Activated CD8-positive, alpha-beta T cell treated with anti-CD3 and anti-CD28 coated beads for 36 hours (primary cell): ENCODE measurements at regions of chr16 and their contacts with region 1.

Region 1: GRCh38 chr16:67159593-67160406 is at the starts of genes FBXL8 and TRADD:
- DNase-seq: peak; percentile 87
- ATAC-seq: peak; percentile 61
- H3K4me3 Mint-ChIP-seq: peak within 1 kb of the TSS; percentile 90
- H3K27ac Mint-ChIP-seq: peak within 1 kb of the TSS; percentile 92
- H3K4me1 Mint-ChIP-seq: peaks cover 53% of the 10 kb centered on the region
- H3K27me3 Mint-ChIP-seq: peaks cover 32% of the 10 kb centered on the region
- CTCF ChIP-seq: peak; percentile 31
- total RNA-seq, gene FBXL8: 27.1 to 28.6 TPM
- total RNA-seq, gene TRADD: 28.4 to 31.2 TPM

Region 2: DNA sequence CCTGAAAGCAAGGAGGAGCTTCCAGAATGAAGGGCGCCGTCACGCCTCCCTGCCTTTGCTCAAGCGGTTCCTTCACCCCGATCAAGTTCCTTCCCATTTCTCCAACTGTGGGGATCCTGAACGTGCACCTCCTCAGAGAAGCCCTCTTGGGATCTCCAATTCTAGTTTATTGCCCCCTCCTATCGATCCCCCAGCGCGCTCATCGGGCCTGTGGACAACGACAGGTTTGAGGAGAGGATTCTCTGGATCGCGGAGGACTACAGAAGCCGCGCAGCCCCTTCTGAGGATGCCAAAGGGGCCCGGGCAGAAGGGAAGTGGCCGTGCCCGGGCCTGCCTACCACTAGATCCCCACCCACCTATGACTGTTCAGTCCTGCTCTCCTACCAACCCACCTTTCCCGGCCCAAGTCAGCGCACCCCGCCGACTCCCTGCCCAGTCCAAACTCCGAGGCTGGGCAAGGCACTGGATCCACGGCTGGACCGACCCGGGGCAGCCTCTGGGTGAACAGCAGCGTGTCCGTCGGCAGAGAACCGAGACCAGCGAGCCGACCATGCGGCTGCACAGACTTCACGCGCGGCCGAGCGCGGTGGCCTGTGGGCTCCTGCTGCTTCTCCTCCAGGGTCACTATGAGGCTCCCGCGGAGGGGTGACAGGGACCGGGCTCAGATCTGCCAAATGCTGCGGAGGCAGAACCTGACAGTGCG is 211.5 kb before region 1 on chr16:
- CTCF ChIA-PET with region 1: interaction called, 20 read pairs
- POLR2A ChIA-PET with region 1: interaction called, 3 read pairs
- intact Hi-C with region 1: loop called (anchors 5 kb)
- DNase-seq: no peak
- ATAC-seq: peak; percentile 26
- H3K4me3 Mint-ChIP-seq: peak overlapping the region; percentile 79
- H3K27ac Mint-ChIP-seq: no peak overlapping the region
- H3K4me1 Mint-ChIP-seq: peaks cover 22% of the 10 kb centered on the region
- H3K27me3 Mint-ChIP-seq: peaks cover 39% of the 10 kb centered on the region
- CTCF ChIP-seq: no peak

Region 3: DNA sequence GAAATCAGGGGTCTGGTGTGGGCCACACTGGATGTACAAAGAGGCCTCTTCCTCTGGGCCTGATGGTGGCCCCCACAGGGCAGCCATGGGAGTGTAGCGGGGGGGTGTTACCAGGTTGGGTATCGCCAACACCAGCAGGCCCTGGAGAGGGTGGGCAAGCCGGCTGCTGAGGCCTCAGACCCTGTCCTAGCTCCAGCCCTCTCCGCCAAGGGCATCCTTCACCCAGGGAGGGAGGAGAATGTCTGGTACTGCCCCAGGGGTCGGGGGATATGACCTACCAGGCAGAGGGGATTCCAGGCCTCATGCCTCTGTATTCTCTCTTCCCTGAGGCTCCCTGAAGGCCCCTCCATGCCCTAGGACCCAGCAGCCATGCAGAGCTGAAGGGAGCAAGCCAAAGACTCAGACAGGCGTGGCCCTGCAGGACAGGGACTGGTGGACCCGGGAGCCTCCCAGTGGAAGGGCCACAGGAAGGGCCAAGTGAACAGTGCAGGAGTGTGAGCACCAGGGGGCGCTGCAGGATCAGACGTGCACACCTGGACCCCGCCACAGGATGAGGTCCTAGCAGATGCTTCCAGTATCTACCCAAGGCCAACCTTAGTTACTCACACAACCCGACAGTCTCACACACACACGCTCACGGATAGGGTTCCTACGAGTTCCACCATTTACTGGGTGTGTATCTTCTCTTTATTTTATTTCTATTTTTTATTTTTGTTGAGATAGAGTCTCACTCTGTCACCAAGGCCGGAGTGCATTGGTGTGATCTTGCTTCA is 182.3 kb before region 1 on chr16:
- CTCF ChIA-PET with region 1: interaction called, 41 read pairs
- POLR2A ChIA-PET with region 1: interaction called, 3 read pairs
- intact Hi-C with region 1: loop called (anchors 5 kb)
- DNase-seq: peak; percentile 96
- ATAC-seq: peak; percentile 96
- H3K4me3 Mint-ChIP-seq: no peak overlapping the region
- H3K27ac Mint-ChIP-seq: no peak overlapping the region
- H3K4me1 Mint-ChIP-seq: peaks cover 44% of the 10 kb centered on the region
- H3K27me3 Mint-ChIP-seq: peaks cover 4% of the 10 kb centered on the region
- CTCF ChIP-seq: peak; percentile 96

Region 4: GRCh38 chr16:67028555-67029248 is 131.1 kb before region 1 on chr16 and contains the start of gene CBFB:
- CTCF ChIA-PET with region 1: interaction called, 187 read pairs
- POLR2A ChIA-PET with region 1: interaction called, 4 read pairs
- intact Hi-C with region 1: loop called (anchors 5 kb)
- DNase-seq: peak; percentile 92
- ATAC-seq: peak; percentile 92
- H3K4me3 Mint-ChIP-seq: peak within 1 kb of the TSS; percentile 86
- H3K27ac Mint-ChIP-seq: peak within 1 kb of the TSS; percentile 95
- H3K4me1 Mint-ChIP-seq: peaks cover 54% of the 10 kb centered on the region
- H3K27me3 Mint-ChIP-seq: no peaks in the 10 kb centered on the region
- CTCF ChIP-seq: peak; percentile 27
- total RNA-seq, gene CBFB: 111 to 114 TPM

Region 5: GRCh38 chr16:67055712-67056487 is 103.9 kb before region 1 on chr16:
- CTCF ChIA-PET with region 1: interaction called, 10 read pairs
- POLR2A ChIA-PET with region 1: no interaction called
- intact Hi-C with region 1: no loop called
- DNase-seq: peak; percentile 29
- ATAC-seq: peak; percentile 78
- H3K4me3 Mint-ChIP-seq: no peak overlapping the region
- H3K27ac Mint-ChIP-seq: peak overlapping the region; percentile 70
- H3K4me1 Mint-ChIP-seq: peaks cover 43% of the 10 kb centered on the region
- H3K27me3 Mint-ChIP-seq: no peaks in the 10 kb centered on the region
- CTCF ChIP-seq: no peak

Region 6: DNA sequence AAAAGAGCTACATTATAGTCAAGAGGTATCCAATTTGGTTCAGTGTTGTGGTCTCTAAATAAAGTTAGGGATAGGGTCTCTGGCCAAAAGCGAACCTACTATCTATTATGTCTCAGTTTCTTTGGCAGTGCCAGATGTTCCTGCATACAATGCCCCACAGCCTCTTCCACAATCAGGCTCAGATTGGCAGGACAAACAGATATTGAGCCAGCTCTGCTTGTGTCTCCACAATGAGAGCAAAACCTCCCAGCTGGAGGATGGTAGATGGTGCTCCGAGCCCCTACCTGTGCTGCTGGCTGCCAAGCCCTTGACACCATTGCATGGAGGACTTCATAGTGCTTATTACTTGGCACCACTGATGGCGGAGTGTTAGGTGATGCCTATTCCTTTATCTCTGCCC is 30.4 kb before region 1 on chr16:
- CTCF ChIA-PET with region 1: interaction called, 15 read pairs
- POLR2A ChIA-PET with region 1: no interaction called
- intact Hi-C with region 1: no loop called
- DNase-seq: no peak
- ATAC-seq: no peak
- H3K4me3 Mint-ChIP-seq: no peak overlapping the region
- H3K27ac Mint-ChIP-seq: no peak overlapping the region
- H3K4me1 Mint-ChIP-seq: no peaks in the 10 kb centered on the region
- H3K27me3 Mint-ChIP-seq: no peaks in the 10 kb centered on the region
- CTCF ChIP-seq: no peak

Region 7: DNA sequence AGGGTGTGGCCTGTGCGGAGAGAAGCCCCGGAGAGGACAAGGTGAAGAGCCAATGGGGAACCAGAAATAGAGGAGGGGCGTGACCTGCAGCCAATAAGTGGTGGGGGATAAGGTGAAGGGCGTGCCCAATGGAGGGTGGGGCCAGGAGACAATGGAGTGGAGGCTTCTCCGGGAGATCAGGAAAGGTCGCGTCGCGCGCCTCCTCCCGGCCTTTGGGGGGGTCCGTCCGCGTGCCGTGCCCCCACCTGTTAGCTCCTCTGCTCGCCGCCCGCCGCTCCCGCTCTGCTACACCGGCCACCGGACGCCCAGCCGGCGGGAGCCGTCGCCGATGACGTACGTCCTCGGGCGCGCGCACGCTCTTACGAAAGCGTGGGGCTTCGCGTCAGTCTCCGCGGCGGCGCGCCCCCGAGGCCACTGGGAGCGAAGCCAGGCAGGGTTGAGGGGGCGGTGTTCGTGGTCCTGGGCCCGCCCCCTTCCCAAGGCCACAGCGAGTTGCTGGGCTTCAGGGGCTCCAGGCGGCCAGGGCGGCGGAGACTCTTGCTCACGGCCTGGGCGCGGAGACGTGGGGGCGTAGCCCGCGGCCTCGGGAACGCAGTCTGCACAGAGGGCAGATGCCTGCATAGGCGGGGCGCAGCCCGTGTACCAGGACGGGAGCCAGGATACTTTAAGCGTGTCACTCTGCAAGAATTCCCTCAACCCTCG is 24.0 kb after region 1 on chr16 and contains the start of gene MATCAP1:
- CTCF ChIA-PET with region 1: interaction called, 209 read pairs
- POLR2A ChIA-PET with region 1: interaction called, 23 read pairs
- intact Hi-C with region 1: no loop called
- DNase-seq: peak; percentile 97
- ATAC-seq: peak; percentile 97
- H3K4me3 Mint-ChIP-seq: peak within 1 kb of the TSS; percentile 66
- H3K27ac Mint-ChIP-seq: no peak within 1 kb of the TSS
- H3K4me1 Mint-ChIP-seq: peaks cover 17% of the 10 kb centered on the region
- H3K27me3 Mint-ChIP-seq: peaks cover 21% of the 10 kb centered on the region
- CTCF ChIP-seq: no peak
- total RNA-seq, gene MATCAP1: 49.5 to 49.9 TPM

Region 8: GRCh38 chr16:67312719-67313275 is 153.0 kb after region 1 on chr16:
- CTCF ChIA-PET with region 1: no interaction called
- POLR2A ChIA-PET with region 1: no interaction called
- intact Hi-C with region 1: no loop called
- DNase-seq: no peak
- ATAC-seq: no peak
- H3K4me3 Mint-ChIP-seq: peak overlapping the region; percentile 2
- H3K27ac Mint-ChIP-seq: peak overlapping the region; percentile 94
- H3K4me1 Mint-ChIP-seq: peaks cover 36% of the 10 kb centered on the region
- H3K27me3 Mint-ChIP-seq: peaks cover 3% of the 10 kb centered on the region
- CTCF ChIP-seq: no peak